ENCODE measurements at regions of chr2 and their contacts with region 1.

Region 1: DNA sequence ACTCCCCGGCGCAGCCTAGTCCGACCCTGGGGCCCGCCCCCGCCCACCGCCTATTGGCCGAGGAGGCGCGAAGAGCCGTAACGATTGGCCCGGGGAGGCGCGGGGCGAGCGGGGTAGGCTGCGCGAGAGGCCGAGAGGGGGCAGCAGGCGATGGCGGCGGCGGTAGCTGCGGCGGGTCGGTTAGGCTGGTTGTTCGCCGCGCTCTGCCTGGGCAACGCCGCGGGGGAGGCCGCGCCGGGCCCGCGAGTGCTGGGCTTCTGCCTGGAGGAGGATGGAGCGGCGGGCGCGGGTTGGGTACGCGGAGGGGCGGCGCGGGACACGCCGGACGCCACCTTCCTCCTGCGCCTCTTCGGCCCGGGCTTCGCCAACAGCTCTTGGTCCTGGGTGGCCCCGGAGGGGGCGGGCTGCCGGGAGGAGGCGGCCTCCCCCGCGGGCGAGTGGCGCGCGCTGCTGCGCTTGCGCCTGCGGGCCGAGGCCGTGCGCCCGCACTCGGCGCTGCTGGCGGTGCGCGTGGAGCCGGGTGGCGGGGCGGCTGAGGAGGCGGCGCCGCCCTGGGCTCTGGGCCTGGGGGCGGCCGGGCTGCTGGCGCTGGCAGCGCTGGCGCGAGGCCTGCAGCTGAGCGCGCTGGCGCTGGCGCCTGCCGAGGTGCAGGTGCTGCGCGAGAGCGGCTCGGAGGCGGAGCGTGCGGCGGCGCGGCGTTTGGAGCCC is at the start of gene CNNM3:
- DNase-seq: peak; percentile 90 to 98 (median 96)
- ATAC-seq: peak; percentile 92
- H3K4me3 ChIP-seq: peak within 1 kb of the TSS; percentile 70 to 83
- H3K4me3 Mint-ChIP-seq: peak within 1 kb of the TSS; percentile 87
- H3K27ac ChIP-seq: peak within 1 kb of the TSS; percentile 57 to 70
- H3K27ac Mint-ChIP-seq: peak within 1 kb of the TSS; percentile 90
- H3K4me1 ChIP-seq: peaks cover 48% of the 10 kb centered on the region
- H3K4me1 Mint-ChIP-seq: peaks cover 63% of the 10 kb centered on the region
- H3K27me3 ChIP-seq: no peaks in the 10 kb centered on the region
- H3K27me3 Mint-ChIP-seq: no peaks in the 10 kb centered on the region
- CTCF ChIP-seq: peak; percentile 63
- total RNA-seq, gene CNNM3: 40.1 to 41.8 TPM

Region 2: GRCh38 chr2:96638144-96639121 is 177.8 kb before region 1 on chr2 and contains the start of gene KANSL3:
- CTCF ChIA-PET with region 1: no interaction called
- POLR2A ChIA-PET with region 1: interaction called, 5 read pairs
- intact Hi-C with region 1: loop called in 1 of 2 experiments (anchors 1 kb)
- DNase-seq: peak; percentile 79 to 95 (median 88)
- ATAC-seq: peak; percentile 85
- H3K4me3 ChIP-seq: peak within 1 kb of the TSS; percentile 71 to 95
- H3K4me3 Mint-ChIP-seq: peak within 1 kb of the TSS; percentile 93
- H3K27ac ChIP-seq: peak within 1 kb of the TSS; percentile 83 to 91
- H3K27ac Mint-ChIP-seq: peak within 1 kb of the TSS; percentile 96
- H3K4me1 ChIP-seq: peaks cover 24% of the 10 kb centered on the region
- H3K4me1 Mint-ChIP-seq: peaks cover 32% of the 10 kb centered on the region
- H3K27me3 ChIP-seq: no peaks in the 10 kb centered on the region
- H3K27me3 Mint-ChIP-seq: peaks cover 2% of the 10 kb centered on the region
- CTCF ChIP-seq: no peak
- total RNA-seq, gene KANSL3: 58.8 to 60.4 TPM

Region 3: GRCh38 chr2:96760036-96760985 is 56.0 kb before region 1 on chr2 and contains the start of gene CNNM4:
- CTCF ChIA-PET with region 1: interaction called, 4 read pairs
- POLR2A ChIA-PET with region 1: interaction called, 16 read pairs
- intact Hi-C with region 1: loop called (anchors 1 to 2 kb)
- DNase-seq: peak; percentile 79 to 95 (median 92)
- ATAC-seq: peak; percentile 94
- H3K4me3 ChIP-seq: peak within 1 kb of the TSS; percentile 67 to 95
- H3K4me3 Mint-ChIP-seq: peak within 1 kb of the TSS; percentile 87
- H3K27ac ChIP-seq: peak within 1 kb of the TSS; percentile 60 to 73
- H3K27ac Mint-ChIP-seq: peak within 1 kb of the TSS; percentile 92
- H3K4me1 ChIP-seq: peaks cover 50% of the 10 kb centered on the region
- H3K4me1 Mint-ChIP-seq: peaks cover 54% of the 10 kb centered on the region
- H3K27me3 ChIP-seq: no peaks in the 10 kb centered on the region
- H3K27me3 Mint-ChIP-seq: no peaks in the 10 kb centered on the region
- CTCF ChIP-seq: no peak
- total RNA-seq, gene CNNM4: 6.7 to 8.3 TPM

Region 4: GRCh38 chr2:96801005-96801785 is 15.1 kb before region 1 on chr2:
- CTCF ChIA-PET with region 1: interaction called, 15 read pairs
- POLR2A ChIA-PET with region 1: interaction called, 12 read pairs
- intact Hi-C with region 1: loop called (anchors 1 kb)
- DNase-seq: peak; percentile 44 to 83 (median 72)
- ATAC-seq: peak; percentile 100
- H3K4me3 ChIP-seq: no peak overlapping the region
- H3K4me3 Mint-ChIP-seq: no peak overlapping the region
- H3K27ac ChIP-seq: no peak overlapping the region
- H3K27ac Mint-ChIP-seq: no peak overlapping the region
- H3K4me1 ChIP-seq: peaks cover 6% of the 10 kb centered on the region
- H3K4me1 Mint-ChIP-seq: peaks cover 5% of the 10 kb centered on the region
- H3K27me3 ChIP-seq: no peaks in the 10 kb centered on the region
- H3K27me3 Mint-ChIP-seq: no peaks in the 10 kb centered on the region
- CTCF ChIP-seq: peak; percentile 64

Region 5: DNA sequence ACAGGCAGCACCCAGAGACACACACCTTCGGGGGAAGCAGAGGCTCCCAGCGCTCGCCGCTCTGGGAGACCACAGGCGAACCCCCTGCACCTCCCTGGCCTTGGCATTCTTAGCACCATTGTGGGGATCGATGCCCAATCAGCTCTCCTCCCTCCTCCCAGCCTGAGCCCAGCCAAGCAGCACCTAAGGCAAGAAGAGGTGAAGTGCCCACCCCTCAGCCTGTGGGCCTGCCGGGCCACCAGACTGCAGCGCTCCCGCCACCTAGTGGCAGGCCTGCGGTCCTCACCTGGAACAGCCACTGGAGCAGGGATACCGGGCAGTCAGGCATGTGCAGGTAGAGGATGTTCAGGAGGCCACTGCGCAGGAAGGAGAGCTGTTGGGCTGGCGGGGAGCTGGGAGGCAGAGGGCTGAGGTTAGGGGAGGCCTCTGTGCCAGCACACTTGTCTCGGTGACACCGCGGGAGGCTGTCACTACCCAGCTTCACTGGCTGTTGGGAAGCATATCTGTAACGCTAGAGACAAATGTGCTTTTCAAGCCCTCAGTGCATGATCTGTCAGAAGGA is 134.9 kb after region 1 on chr2:
- CTCF ChIA-PET with region 1: interaction called, 8 read pairs
- POLR2A ChIA-PET with region 1: no interaction called
- intact Hi-C with region 1: loop called in 1 of 2 experiments (anchors 1 kb)
- DNase-seq: peak; percentile 55 to 89 (median 78)
- ATAC-seq: peak; percentile 98
- H3K4me3 ChIP-seq: no peak overlapping the region
- H3K4me3 Mint-ChIP-seq: no peak overlapping the region
- H3K27ac ChIP-seq: no peak overlapping the region
- H3K27ac Mint-ChIP-seq: no peak overlapping the region
- H3K4me1 ChIP-seq: peaks cover 23% of the 10 kb centered on the region
- H3K4me1 Mint-ChIP-seq: peaks cover 21% of the 10 kb centered on the region
- H3K27me3 ChIP-seq: no peaks in the 10 kb centered on the region
- H3K27me3 Mint-ChIP-seq: no peaks in the 10 kb centered on the region
- CTCF ChIP-seq: peak; percentile 90